OCI-LY7 (cell line): ENCODE measurements at regions of chr15 and their contacts with region 1.

Region 1: GRCh38 chr15:41416742-41417406 is at the start of gene RTF1:
- DNase-seq: peak; percentile 92
- H3K4me3 ChIP-seq: peak within 1 kb of the TSS; percentile 79
- H3K27ac ChIP-seq: peak within 1 kb of the TSS; percentile 22
- H3K4me1 ChIP-seq: peaks cover 30% of the 10 kb centered on the region
- CTCF ChIP-seq: no peak
- total RNA-seq, gene RTF1: 28.6 and 35.9 TPM in 2 replicates

Region 2: DNA sequence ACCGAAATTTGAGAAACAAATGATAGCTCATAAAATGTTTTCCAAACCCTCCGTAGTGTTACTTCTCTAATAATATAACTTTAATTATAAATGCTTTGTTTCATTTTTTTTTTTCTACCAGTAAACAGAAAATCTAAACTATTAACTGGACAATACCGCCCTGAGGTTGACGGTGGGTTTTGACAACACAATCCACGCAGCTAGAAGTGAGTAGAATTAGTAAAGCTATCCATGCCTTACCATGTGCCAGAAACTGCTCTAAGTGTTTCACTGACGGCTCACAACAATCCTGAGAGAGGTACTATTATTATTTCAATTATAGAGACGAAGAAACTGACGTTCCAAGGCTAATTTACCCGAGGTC is 15.0 kb before region 1 on chr15:
- CTCF ChIA-PET with region 1: no interaction called
- POLR2A ChIA-PET with region 1: interaction called, 5 read pairs
- intact Hi-C with region 1: loop called (anchors 1 kb)
- DNase-seq: no peak
- H3K4me3 ChIP-seq: peak overlapping the region; percentile 80
- H3K27ac ChIP-seq: peak overlapping the region; percentile 82
- H3K4me1 ChIP-seq: peaks cover 20% of the 10 kb centered on the region
- CTCF ChIP-seq: no peak

Region 3: DNA sequence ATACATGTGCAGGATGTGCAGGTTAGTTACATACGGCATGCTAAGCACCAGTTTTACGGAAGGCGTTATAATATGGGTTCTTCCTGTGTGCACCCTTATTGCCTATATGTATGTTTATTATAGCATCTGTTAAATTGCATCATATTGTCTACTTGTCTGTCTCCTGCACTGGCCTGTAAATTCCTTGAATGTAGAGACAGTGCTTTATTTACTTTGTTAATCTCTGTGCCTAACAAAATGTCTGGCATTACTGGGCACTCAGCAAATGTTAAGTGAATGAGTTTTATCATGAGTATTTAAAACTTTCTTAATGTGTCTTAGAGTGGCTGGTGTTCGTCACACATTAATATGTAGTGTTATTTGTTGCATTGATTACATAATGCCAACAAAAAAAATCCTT is 267.1 kb after region 1 on chr15:
- CTCF ChIA-PET with region 1: no interaction called
- POLR2A ChIA-PET with region 1: no interaction called
- intact Hi-C with region 1: no loop called
- DNase-seq: no peak
- H3K4me3 ChIP-seq: no peak overlapping the region
- H3K27ac ChIP-seq: no peak overlapping the region
- H3K4me1 ChIP-seq: peaks cover 15% of the 10 kb centered on the region
- CTCF ChIP-seq: no peak